ENCODE measurements at regions of chr7 and their contacts with region 1.

Region 1: GRCh38 chr7:106022193-106022821 is 59.2 kb downstream of the CDHR3 start:
- DNase-seq: peak; percentile 68
- H3K4me3 Mint-ChIP-seq: peak overlapping the region; percentile 6
- H3K27ac Mint-ChIP-seq: peak overlapping the region; percentile 85
- H3K4me1 Mint-ChIP-seq: peaks cover 53% of the 10 kb centered on the region
- H3K27me3 Mint-ChIP-seq: peaks cover 7% of the 10 kb centered on the region

Region 2: GRCh38 chr7:105691733-105692564 is 330.4 kb before region 1 on chr7:
- intact Hi-C with region 1: loop called (anchors 5 kb)
- DNase-seq: peak; percentile 44
- H3K4me3 Mint-ChIP-seq: peak overlapping the region; percentile 89
- H3K27ac Mint-ChIP-seq: peak overlapping the region; percentile 85
- H3K4me1 Mint-ChIP-seq: peaks cover 30% of the 10 kb centered on the region
- H3K27me3 Mint-ChIP-seq: no peaks in the 10 kb centered on the region

Region 3: DNA sequence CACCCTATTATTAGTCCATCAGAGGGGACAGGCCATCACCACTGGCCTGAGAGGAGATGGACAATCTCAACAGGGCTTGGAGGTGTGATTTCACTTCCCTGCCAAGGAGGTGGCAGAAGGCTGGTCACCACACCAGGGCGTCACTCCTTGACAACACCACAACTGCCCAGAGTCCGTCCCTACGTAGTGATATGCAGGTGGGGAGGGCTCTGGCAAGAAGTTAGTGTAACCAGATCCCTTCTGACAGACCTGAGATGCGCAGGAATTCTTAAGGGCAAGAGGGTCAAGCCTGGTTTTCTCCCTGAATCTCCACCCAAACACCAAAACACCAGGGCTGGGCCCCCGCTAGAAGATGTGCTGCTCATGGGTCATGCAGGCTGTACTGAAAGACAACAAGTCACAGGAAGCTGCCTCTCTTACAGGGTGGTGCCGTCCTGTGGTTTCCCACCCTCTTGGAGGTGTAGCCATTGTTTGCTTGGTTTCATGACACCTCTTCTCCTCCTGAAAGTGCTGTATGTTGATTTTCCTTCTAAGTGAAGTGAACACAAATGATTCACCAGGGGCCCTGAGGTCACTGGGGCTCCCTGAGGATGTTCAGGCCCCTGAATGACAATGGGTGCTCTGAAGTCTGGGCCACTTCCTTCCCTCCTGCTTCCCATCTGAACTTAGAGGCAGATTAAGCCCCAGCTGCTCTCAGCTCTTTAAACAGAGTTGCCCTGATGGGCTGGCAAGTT is 173.0 kb before region 1 on chr7:
- intact Hi-C with region 1: loop called (anchors 2 kb)
- DNase-seq: peak; percentile 69
- H3K4me3 Mint-ChIP-seq: peak overlapping the region; percentile 37
- H3K27ac Mint-ChIP-seq: peak overlapping the region; percentile 75
- H3K4me1 Mint-ChIP-seq: peaks cover 58% of the 10 kb centered on the region
- H3K27me3 Mint-ChIP-seq: no peaks in the 10 kb centered on the region

Region 4: GRCh38 chr7:105890290-105890997 is 131.9 kb before region 1 on chr7:
- intact Hi-C with region 1: loop called (anchors 1 kb)
- DNase-seq: no peak
- H3K4me3 Mint-ChIP-seq: no peak overlapping the region
- H3K27ac Mint-ChIP-seq: no peak overlapping the region
- H3K4me1 Mint-ChIP-seq: peaks cover 13% of the 10 kb centered on the region
- H3K27me3 Mint-ChIP-seq: peaks cover 24% of the 10 kb centered on the region

Measured in activated T-helper 2 cell treated with anti-CD3 and anti-CD28 coated beads, Interferon-gamma antibody, Interleukin-2, Interleukin-4, amounts not matched to agents 10 μg/mL and 5 μg/mL and 100 μg/mL, durations not matched to agents 14 hours and 24 hours and 36 hours (primary cell).